ENCODE measurements at regions of chr12 and their contacts with region 1.

Region 1: DNA sequence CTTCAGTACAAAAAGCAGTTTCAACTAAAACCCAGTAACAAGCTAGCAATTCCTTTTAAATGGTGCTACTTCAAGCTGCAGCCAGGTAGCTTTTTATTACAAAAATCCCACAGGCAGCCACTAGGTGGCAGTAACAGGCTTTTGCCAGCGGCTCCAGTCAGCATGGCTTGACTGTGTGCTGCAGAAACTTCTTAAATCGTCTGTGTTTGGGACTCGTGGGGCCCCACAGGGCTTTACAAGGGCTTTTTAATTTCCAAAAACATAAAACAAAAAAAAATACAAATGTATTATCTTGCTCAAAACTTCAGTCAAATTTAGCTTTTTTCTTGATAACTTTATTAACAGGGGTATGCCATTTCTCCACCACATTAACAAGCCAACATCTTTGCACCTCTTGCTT is 3.6 kb upstream of the CLEC4E start:
- DNase-seq: peak; percentile 4
- H3K4me3 ChIP-seq: no peak overlapping the region
- H3K27me3 ChIP-seq: no peaks in the 10 kb centered on the region
- CTCF ChIP-seq: peak; percentile 90

Region 2: GRCh38 chr12:8532045-8532444 is 12.2 kb before region 1 on chr12:
- CTCF ChIA-PET with region 1: interaction called, 12 read pairs
- POLR2A ChIA-PET with region 1: no interaction called
- DNase-seq: no peak
- H3K4me3 ChIP-seq: no peak overlapping the region
- H3K27me3 ChIP-seq: no peaks in the 10 kb centered on the region
- CTCF ChIP-seq: no peak

Region 3: DNA sequence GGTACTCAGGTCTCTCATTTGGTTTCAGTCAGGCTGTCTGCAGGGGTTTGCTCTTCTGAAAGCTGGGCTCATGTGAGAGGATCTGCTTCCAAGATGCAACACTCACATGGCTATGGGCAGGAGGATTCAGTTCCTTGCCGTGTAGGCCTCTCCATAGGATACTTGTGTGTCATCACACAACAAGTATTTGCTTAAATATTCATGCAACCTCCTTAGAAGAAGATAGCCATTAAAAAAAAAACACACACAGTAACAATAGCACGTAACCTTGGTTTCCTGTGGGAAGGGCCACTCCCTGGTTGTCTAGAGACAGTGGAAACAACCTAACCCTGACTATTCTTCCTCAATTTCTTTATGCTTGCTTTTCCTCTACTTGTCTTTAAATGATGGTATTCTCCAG is 28.2 kb after region 1 on chr12:
- CTCF ChIA-PET with region 1: interaction called, 10 read pairs
- POLR2A ChIA-PET with region 1: no interaction called
- DNase-seq: no peak
- H3K4me3 ChIP-seq: no peak overlapping the region
- H3K27me3 ChIP-seq: no peaks in the 10 kb centered on the region
- CTCF ChIP-seq: no peak

Region 4: GRCh38 chr12:8609061-8609570 is 64.8 kb after region 1 on chr12:
- CTCF ChIA-PET with region 1: interaction called, 32 read pairs
- POLR2A ChIA-PET with region 1: no interaction called
- DNase-seq: no peak
- H3K4me3 ChIP-seq: no peak overlapping the region
- H3K27me3 ChIP-seq: no peaks in the 10 kb centered on the region
- CTCF ChIP-seq: peak; percentile 85

Region 5: DNA sequence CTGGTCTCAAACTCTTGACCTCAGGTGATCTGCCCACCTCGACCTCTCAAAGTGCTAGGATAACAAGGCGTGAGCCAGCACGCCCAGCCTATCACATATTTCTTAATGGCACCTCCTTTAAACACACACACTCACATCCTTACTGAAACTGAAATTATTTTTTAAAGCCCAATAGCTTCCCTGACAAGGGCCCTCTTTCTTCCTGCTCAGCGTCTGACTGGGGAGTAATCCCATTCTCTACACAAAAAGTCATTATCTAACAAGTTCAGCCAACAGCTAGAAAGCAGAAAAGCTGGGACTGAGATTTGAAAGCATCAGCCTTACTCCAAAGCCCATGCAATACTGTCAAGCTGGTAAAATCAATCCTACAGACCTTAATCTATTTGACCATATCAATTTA is 78.4 kb after region 1 on chr12:
- CTCF ChIA-PET with region 1: interaction called, 13 read pairs
- POLR2A ChIA-PET with region 1: no interaction called
- DNase-seq: no peak
- H3K4me3 ChIP-seq: no peak overlapping the region
- H3K27me3 ChIP-seq: no peaks in the 10 kb centered on the region
- CTCF ChIP-seq: no peak

Region 6: DNA sequence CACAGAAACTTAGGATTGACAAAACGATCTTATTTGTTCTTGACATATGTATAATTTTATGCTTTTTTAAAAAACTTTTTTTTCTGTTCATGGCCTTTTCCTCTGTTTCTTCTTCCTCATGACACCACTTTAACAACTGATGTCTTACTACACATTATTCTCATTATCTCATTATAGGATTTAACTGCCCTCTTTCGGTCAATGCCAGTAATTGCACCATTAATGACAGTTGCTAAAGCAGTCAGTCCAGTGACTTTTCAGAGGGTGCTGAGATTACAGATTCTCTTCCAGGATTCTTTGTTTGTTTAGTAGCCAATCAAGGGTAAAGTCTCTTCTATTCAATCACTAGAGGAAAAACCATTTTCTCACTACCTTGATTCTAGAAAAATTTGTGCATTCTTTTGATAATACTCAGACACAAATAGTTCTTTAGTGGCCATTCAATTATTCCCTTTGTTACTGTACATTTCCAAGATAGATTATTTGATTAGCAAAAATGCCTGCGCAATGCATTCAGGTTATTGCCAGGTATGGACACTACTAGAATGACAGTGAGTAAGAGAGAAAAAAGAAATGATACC is 495.2 kb after region 1 on chr12:
- CTCF ChIA-PET with region 1: interaction called, 14 read pairs
- POLR2A ChIA-PET with region 1: no interaction called
- DNase-seq: no peak
- H3K4me3 ChIP-seq: no peak overlapping the region
- H3K27me3 ChIP-seq: no peaks in the 10 kb centered on the region
- CTCF ChIP-seq: peak; percentile 66

Region 7: GRCh38 chr12:9049520-9050133 is 505.3 kb after region 1 on chr12:
- CTCF ChIA-PET with region 1: interaction called, 35 read pairs
- POLR2A ChIA-PET with region 1: no interaction called
- DNase-seq: no peak
- H3K4me3 ChIP-seq: no peak overlapping the region
- H3K27me3 ChIP-seq: peaks cover 5% of the 10 kb centered on the region
- CTCF ChIP-seq: peak; percentile 53

Measured in BJ (cell line).